Left lung (tissue), 14 donors: ENCODE measurements at regions of chr1 and their contacts with region 1.

Region 1: GRCh38 chr1:202184750-202185460 is 8.7 kb upstream of the LGR6 start:
- DNase-seq: peak; percentile 53 to 95 (median 82)
- ATAC-seq: peak; percentile 73
- H3K4me3 ChIP-seq: no peak overlapping the region
- H3K27ac ChIP-seq: no peak overlapping the region
- H3K4me1 ChIP-seq: no peaks in the 10 kb centered on the region
- H3K27me3 ChIP-seq: peaks cover 0 to 32% of the 10 kb centered on the region in 2 donors
- CTCF ChIP-seq: peak; percentile 80 to 91

Region 2: DNA sequence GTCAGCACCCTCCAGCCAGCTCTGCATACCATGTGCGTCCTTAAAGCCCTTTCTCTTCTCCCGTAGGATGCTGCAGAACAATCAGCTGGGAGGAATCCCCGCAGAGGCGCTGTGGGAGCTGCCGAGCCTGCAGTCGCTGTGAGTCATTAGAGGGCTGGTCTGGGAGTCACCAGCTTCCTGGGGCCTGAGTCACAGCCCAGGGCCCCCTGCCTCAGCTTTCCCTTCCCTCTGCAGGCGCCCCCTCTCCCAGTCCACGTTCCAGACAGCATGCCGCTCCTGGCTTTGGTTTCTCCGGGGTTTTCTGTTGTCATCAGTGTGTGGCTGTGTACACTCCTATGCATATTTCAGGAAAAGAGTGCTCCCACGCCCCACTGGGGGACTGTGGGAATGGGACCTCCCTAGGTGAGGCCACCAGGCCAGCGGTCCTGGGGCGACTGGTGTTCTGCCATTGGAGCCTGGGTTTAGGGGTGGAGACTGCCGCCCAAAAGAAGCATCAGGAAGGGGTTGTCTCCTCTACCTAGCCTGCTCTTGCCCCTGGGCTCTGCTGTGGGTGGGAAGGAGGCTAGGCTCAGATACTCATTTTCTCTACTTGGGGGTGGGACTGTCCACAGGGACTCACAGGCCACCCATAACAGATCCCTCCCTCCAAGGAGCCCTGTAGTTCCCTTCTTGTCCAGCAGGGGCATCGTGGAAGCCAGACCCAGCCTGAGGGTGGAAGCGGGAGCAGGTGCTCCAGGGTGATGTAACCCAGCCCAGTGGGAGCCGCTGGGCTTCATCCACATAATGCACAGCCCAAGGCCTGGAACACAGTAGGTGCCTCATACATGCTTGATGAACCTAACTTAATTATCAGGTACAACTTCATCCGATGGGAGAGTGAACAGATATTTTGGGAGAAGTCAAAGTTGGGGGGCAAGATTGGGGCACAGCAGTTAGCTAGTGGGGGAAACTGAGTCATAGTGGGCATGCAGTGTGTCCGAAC is 51.2 kb after region 1 on chr1:
- intact Hi-C with region 1: no loop called
- DNase-seq: peak in 2 of 4 donors; percentile 48 to 57
- ATAC-seq: peak; percentile 94
- H3K4me3 ChIP-seq: no peak overlapping the region
- H3K27ac ChIP-seq: no peak overlapping the region
- H3K4me1 ChIP-seq: no peaks in the 10 kb centered on the region
- H3K27me3 ChIP-seq: peaks cover 0 to 25% of the 10 kb centered on the region in 2 donors
- CTCF ChIP-seq: peak; percentile 79 to 89

Region 3: DNA sequence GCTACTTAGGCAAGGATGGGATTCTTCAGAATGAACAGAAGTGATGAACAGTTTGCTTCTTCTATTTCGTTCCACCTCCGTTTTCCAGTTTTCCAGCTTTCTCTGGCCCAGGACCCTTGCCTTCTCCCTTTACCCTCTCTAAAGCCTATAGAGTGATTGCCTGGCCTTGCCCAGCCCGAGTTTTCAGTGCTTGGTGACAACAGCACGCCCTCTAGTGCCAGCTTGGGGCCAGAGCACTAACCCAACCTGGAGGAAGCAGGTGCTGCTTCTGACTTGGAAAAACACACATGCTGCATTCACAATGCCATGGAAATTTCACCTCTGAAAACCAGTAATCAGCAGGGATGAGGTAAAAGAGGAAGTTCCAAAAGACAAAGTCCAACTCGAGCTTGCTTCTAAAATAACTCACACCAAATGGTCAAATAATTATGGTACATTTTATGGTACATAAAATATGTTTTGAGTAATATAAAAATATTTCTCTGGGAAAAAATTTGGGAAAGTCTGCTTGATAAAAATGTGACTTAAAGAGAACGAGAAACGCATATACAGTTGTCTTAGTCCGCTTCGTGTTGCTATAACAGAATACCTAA is 130.8 kb after region 1 on chr1:
- intact Hi-C with region 1: loop called in 1 of 2 experiments (anchors 5 kb)
- DNase-seq: peak; percentile 60 to 86 (median 74)
- ATAC-seq: peak; percentile 96
- H3K4me3 ChIP-seq: no peak overlapping the region
- H3K27ac ChIP-seq: no peak overlapping the region
- H3K4me1 ChIP-seq: no peaks in the 10 kb centered on the region
- H3K27me3 ChIP-seq: peaks cover 0 to 9% of the 10 kb centered on the region in 2 donors
- CTCF ChIP-seq: peak; percentile 86 to 89

Region 4: DNA sequence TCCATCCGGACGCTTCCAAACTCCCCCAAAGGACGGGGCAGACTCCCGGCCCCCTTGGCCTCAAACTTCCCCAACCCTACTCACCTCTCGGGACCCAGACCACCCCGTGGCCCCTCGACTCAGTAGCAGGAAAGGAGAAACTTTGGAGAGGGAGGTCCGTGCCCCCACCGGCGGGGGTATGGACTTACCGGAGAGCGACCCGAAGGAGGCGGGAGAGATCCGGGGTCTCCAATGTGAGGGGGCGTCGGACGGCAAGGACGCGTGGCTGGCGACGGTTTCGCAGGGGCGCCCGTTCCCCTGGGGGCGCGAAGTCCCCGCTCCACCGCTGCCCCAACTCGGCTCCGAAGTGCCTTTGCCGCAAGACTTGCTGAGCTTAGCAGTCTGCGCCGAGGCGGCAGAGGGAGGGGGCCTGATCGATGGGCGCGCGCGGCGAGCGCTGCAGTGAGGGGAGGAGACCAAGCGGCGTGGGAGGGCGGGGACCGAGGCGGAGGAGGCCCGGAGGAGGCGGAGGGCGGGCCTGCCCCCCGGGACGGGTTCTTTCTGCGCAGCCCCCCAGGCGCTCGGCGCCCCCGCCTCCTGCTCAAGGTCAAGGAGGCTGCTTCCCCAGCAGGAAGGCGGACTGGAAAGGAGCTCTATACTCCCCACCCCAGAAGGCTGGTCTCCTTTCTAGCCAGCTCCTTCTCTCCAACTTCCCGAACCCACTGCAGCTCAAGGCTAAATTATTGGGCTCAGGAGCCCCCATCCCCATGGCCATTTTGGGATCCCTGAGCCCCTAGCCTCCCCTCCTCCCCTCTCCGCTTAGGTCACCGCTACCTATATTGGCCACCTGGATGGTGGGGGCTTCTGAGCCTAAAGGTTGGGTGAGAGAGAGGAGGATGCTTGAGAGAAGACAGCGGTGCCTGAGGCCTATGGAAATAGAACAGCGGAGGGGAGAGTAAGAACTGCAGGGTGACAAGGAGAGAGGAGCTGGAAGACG is 525.5 kb after region 1 on chr1 and contains the start of gene SYT2:
- intact Hi-C with region 1: loop called in 1 of 2 experiments (anchors 10 kb)
- DNase-seq: peak; percentile 38 to 81 (median 69)
- ATAC-seq: peak; percentile 69
- H3K4me3 ChIP-seq: peak within 1 kb of the TSS in 1 of 2 donors; percentile 14
- H3K27ac ChIP-seq: no peak within 1 kb of the TSS
- H3K4me1 ChIP-seq: peaks cover 9 to 13% of the 10 kb centered on the region in 2 donors
- H3K27me3 ChIP-seq: peaks cover 42 to 100% of the 10 kb centered on the region in 2 donors
- CTCF ChIP-seq: no peak
- polyA plus RNA-seq, gene SYT2: 2.3 to 5.4 (median 3.0) TPM